Head of caudate nucleus (tissue), 42 donors: ENCODE measurements at regions of chr17 and their contacts with region 1.

Region 1: GRCh38 chr17:39668199-39668966 is at the start of gene PNMT:
- DNase-seq: peak in 39 of 42 donors; percentile 57 to 88 (median 76)

Region 2: DNA sequence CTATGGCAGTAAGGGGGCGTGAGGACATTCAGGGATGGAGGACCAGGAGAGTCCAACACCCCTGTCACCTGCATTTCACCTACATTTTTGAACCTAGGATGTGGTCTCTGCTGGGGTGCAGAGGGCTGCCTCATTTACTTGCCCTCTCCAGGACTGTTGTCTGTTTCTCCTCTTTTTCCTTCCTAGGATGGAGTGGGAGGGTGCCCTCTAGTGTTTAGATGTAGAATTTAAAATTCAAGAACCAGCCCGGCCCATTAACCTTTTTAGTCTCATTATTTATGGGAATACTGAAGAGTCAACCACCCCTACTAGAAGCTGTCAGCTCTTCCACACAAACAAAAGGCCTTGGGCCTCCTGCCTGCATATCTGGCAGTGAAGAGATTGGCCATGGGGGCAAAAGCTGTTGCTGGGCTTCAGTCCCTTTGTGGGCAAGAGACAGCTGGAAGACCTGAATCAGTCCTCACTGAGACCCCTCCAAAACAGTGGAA is 34.0 kb before region 1 on chr17:
- intact Hi-C with region 1: loop called (anchors 5 kb)
- DNase-seq: peak in 4 of 42 donors; percentile 47 to 69 (median 58)